ENCODE measurements at regions of chr4 and their contacts with region 1.

Region 1: DNA sequence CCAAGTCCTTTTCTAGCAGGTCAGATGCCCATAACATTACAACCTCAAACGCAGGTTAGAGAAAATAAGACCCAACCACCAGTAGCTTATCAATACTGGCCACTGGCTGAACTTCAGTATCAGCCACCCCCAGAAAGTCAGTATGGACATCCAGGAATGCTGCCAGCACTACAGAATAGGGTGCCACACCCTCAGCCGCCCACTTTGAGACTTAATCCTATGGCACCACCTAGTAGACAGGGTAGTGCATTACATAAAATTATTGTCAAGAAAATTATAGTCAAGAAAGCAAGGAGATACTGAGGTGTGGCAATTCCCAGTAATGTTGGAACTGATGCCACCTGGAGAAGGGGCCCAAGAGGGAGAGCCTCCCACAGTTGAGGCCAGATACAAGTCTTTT is 19.9 kb upstream of the TRIM61 start:
- DNase-seq: peak in 1 of 2 experiments; percentile 15
- H3K4me3 ChIP-seq: no peak overlapping the region
- H3K4me3 Mint-ChIP-seq: no peak overlapping the region
- H3K27ac Mint-ChIP-seq: no peak overlapping the region
- H3K4me1 ChIP-seq: no peaks in the 10 kb centered on the region; the same call in 1 of the 2 replicates
- H3K4me1 Mint-ChIP-seq: no peaks in the 10 kb centered on the region
- H3K27me3 ChIP-seq: no peaks in the 10 kb centered on the region
- H3K27me3 Mint-ChIP-seq: no peaks in the 10 kb centered on the region
- CTCF ChIP-seq: no peak

Region 2: GRCh38 chr4:164716901-164717300 is 280.4 kb before region 1 on chr4:
- CTCF ChIA-PET with region 1: no interaction called
- POLR2A ChIA-PET with region 1: no interaction called
- intact Hi-C with region 1: loop called (anchors 5 kb)
- DNase-seq: peak in 1 of 2 experiments; percentile 34
- H3K4me3 ChIP-seq: no peak overlapping the region
- H3K4me3 Mint-ChIP-seq: no peak overlapping the region
- H3K27ac Mint-ChIP-seq: no peak overlapping the region
- H3K4me1 ChIP-seq: no peaks in the 10 kb centered on the region
- H3K4me1 Mint-ChIP-seq: no peaks in the 10 kb centered on the region
- H3K27me3 ChIP-seq: no peaks in the 10 kb centered on the region
- H3K27me3 Mint-ChIP-seq: peaks cover 3% of the 10 kb centered on the region
- CTCF ChIP-seq: peak; percentile 33 to 57

Region 3: DNA sequence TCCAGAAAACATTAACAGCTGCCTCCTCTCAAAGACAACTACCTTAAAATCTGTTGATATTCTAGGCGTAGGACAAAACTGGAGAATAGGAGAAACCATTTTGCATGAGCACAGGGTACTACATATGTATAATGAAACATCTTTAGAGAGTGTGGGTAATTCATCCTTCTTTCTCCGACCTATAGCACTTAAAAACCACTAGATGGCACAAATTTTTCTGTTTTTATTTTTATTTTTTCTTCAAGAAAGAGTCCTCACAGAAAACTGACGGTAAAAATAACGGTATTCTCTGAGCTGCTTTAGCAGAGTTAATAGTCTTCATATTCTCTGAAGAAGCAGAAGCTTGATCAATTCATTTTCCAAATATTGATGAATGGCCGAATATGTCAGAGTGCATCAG is 228.8 kb before region 1 on chr4:
- CTCF ChIA-PET with region 1: no interaction called
- POLR2A ChIA-PET with region 1: no interaction called
- intact Hi-C with region 1: loop called (anchors 1 kb)
- DNase-seq: no peak
- H3K4me3 ChIP-seq: no peak overlapping the region
- H3K4me3 Mint-ChIP-seq: no peak overlapping the region
- H3K27ac Mint-ChIP-seq: no peak overlapping the region
- H3K4me1 ChIP-seq: no peaks in the 10 kb centered on the region
- H3K4me1 Mint-ChIP-seq: peaks cover 20% of the 10 kb centered on the region
- H3K27me3 ChIP-seq: no peaks in the 10 kb centered on the region
- H3K27me3 Mint-ChIP-seq: no peaks in the 10 kb centered on the region
- CTCF ChIP-seq: peak; percentile 19 to 47

Region 4: GRCh38 chr4:164926301-164926700 is 71.0 kb before region 1 on chr4:
- CTCF ChIA-PET with region 1: no interaction called
- POLR2A ChIA-PET with region 1: no interaction called
- intact Hi-C with region 1: no loop called
- DNase-seq: no peak
- H3K4me3 ChIP-seq: no peak overlapping the region
- H3K4me3 Mint-ChIP-seq: no peak overlapping the region
- H3K27ac Mint-ChIP-seq: no peak overlapping the region
- H3K4me1 ChIP-seq: no peaks in the 10 kb centered on the region
- H3K4me1 Mint-ChIP-seq: no peaks in the 10 kb centered on the region
- H3K27me3 ChIP-seq: no peaks in the 10 kb centered on the region
- H3K27me3 Mint-ChIP-seq: no peaks in the 10 kb centered on the region
- CTCF ChIP-seq: no peak

Measured in Caco-2 (cell line).